PC-3 (cell line): ENCODE measurements at regions of chr3 and their contacts with region 1.

Region 1: DNA sequence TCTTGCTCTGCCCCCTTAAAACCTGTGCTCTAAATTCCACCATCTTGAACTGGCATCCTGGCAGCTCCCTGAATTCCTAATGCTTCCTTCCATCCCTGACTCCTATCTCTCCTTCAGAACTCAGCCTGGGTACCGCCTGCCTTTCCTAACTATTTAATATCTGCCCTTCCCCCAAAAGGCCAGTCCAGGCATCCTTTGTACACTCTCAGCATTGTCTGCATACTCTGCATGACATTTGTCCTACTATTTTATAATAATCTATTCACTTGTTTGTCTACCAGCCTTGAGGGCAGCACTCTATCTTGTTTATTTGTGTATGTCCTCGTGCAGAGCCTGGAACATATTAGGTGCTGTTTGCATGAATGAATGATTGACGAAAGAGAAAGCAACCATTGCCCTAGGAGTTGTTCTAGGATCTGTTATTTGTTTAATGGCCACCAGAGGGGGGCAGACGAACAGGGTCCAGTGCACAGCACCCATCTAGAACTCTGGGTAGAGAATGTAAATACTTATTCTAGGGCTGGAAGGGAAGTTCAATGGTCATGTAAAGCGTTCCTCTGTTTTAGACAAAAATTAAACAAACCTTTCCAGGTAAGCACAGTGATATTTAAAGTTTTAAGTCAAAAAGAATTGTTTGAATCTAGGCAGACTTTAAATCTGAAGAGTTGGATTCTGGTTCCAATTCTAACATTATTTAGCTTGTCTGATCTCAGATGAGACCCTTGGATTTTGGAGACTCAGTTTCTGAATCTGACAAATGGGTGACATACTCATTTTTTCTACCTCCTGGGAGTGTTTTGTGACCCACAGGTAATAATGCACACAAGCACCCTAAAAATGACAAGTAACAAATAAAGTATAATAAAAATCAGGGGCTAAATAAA is 125.8 kb upstream of the GALNT15 start:
- DNase-seq: peak; percentile 83
- ATAC-seq: peak; percentile 99
- H3K4me3 ChIP-seq: peak overlapping the region; percentile 28
- H3K27ac ChIP-seq: no peak overlapping the region
- H3K4me1 ChIP-seq: no peaks in the 10 kb centered on the region
- H3K27me3 ChIP-seq: no peaks in the 10 kb centered on the region
- CTCF ChIP-seq: peak; percentile 95

Region 2: GRCh38 chr3:15629860-15630597 is 418.6 kb before region 1 on chr3:
- CTCF ChIA-PET with region 1: interaction called, 4 read pairs
- POLR2A ChIA-PET with region 1: no interaction called
- intact Hi-C with region 1: loop called (anchors 1 kb)
- DNase-seq: peak; percentile 92
- ATAC-seq: peak; percentile 68
- H3K4me3 ChIP-seq: peak overlapping the region; percentile 55
- H3K27ac ChIP-seq: peak overlapping the region; percentile 89
- H3K4me1 ChIP-seq: peaks cover 50% of the 10 kb centered on the region
- H3K27me3 ChIP-seq: no peaks in the 10 kb centered on the region
- CTCF ChIP-seq: peak; percentile 95

Region 3: GRCh38 chr3:15815696-15816095 is 233.0 kb before region 1 on chr3:
- CTCF ChIA-PET with region 1: interaction called, 4 read pairs
- POLR2A ChIA-PET with region 1: no interaction called
- intact Hi-C with region 1: loop called (anchors 1 kb)
- DNase-seq: peak; percentile 84
- ATAC-seq: peak; percentile 59
- H3K4me3 ChIP-seq: no peak overlapping the region
- H3K27ac ChIP-seq: no peak overlapping the region
- H3K4me1 ChIP-seq: peaks cover 21% of the 10 kb centered on the region
- H3K27me3 ChIP-seq: no peaks in the 10 kb centered on the region
- CTCF ChIP-seq: peak; percentile 84

Region 4: DNA sequence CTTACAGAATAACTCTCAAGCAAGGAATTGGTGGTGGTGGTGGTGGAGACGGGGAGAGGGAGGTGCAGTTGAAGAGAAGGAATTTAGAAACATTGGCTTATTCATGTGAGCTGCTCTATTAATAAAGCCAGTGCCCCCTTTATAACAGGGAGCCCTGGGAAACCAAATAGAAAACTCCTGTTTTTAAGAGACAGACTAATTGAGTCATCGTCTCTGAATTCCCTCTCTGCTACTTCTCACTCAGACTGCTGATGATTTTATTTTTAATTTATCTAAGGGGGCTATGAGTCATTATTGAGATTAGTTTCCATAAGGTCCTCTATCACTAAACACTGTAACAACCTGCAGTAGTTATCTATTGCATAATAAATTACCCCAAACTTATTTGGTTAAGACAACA is 20.1 kb before region 1 on chr3:
- CTCF ChIA-PET with region 1: no interaction called
- POLR2A ChIA-PET with region 1: no interaction called
- intact Hi-C with region 1: no loop called
- DNase-seq: no peak
- ATAC-seq: no peak
- H3K4me3 ChIP-seq: no peak overlapping the region
- H3K27ac ChIP-seq: no peak overlapping the region
- H3K4me1 ChIP-seq: no peaks in the 10 kb centered on the region
- H3K27me3 ChIP-seq: no peaks in the 10 kb centered on the region
- CTCF ChIP-seq: no peak

Region 5: DNA sequence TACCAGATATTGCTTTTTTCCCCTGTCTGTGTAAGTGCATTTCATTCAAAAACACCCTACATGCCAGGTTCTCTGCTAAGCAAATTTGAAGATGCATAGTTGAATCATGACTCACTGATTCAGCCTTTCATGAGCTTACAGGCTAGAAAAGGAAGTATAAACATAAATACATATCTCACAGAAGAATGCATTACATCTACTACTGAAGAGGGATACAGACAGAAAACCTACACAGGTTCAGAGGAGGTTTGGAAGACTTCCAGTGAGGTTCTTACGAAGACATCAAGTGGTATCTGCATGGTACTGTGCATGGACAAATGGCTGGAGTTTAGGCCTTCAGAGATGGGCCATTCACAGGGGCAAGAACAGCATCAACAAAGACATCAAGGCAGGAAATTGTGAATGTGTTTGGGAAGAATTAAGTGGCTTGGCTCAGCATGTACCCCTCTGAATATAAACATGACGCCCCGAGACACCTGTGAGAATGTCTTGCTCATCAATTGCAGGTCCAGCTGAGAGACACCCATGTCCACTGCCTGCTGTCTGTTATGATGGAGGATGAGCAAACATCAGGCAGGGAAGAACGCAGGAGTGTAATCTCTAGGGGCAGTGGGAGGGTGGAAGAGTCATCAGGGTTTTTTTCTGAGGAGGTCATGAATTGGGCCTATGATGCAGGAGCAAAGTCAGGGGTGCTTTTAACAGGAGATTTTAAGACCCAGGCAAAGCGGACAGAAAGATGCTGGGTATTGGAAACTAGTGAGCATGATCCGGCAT is 20.7 kb after region 1 on chr3:
- CTCF ChIA-PET with region 1: interaction called, 9 read pairs
- POLR2A ChIA-PET with region 1: no interaction called
- intact Hi-C with region 1: loop called (anchors 1 kb)
- DNase-seq: peak; percentile 97
- ATAC-seq: peak; percentile 50
- H3K4me3 ChIP-seq: no peak overlapping the region
- H3K27ac ChIP-seq: peak overlapping the region; percentile 78
- H3K4me1 ChIP-seq: peaks cover 81% of the 10 kb centered on the region
- H3K27me3 ChIP-seq: no peaks in the 10 kb centered on the region
- CTCF ChIP-seq: no peak

Region 6: GRCh38 chr3:16112910-16113504 is 64.3 kb after region 1 on chr3:
- CTCF ChIA-PET with region 1: no interaction called
- POLR2A ChIA-PET with region 1: no interaction called
- intact Hi-C with region 1: no loop called
- DNase-seq: peak; percentile 25
- ATAC-seq: peak; percentile 70
- H3K4me3 ChIP-seq: no peak overlapping the region
- H3K27ac ChIP-seq: peak overlapping the region; percentile 53
- H3K4me1 ChIP-seq: peaks cover 10% of the 10 kb centered on the region; the same call in 1 of the 2 replicates
- H3K27me3 ChIP-seq: no peaks in the 10 kb centered on the region
- CTCF ChIP-seq: no peak

Region 7: GRCh38 chr3:16140116-16140893 is 91.6 kb after region 1 on chr3:
- CTCF ChIA-PET with region 1: interaction called, 23 read pairs
- POLR2A ChIA-PET with region 1: no interaction called
- intact Hi-C with region 1: loop called (anchors 1 kb)
- DNase-seq: peak; percentile 78
- ATAC-seq: peak; percentile 88
- H3K4me3 ChIP-seq: no peak overlapping the region
- H3K27ac ChIP-seq: peak overlapping the region; percentile 58
- H3K4me1 ChIP-seq: peaks cover 15% of the 10 kb centered on the region
- H3K27me3 ChIP-seq: no peaks in the 10 kb centered on the region
- CTCF ChIP-seq: no peak

Region 8: GRCh38 chr3:16247276-16248061 is 198.8 kb after region 1 on chr3:
- CTCF ChIA-PET with region 1: no interaction called
- POLR2A ChIA-PET with region 1: no interaction called
- intact Hi-C with region 1: loop called (anchors 1 kb)
- DNase-seq: peak; percentile 93
- ATAC-seq: peak; percentile 87
- H3K4me3 ChIP-seq: peak overlapping the region; percentile 33; the same call in 1 of the 2 replicates
- H3K27ac ChIP-seq: no peak overlapping the region
- H3K4me1 ChIP-seq: peaks cover 25% of the 10 kb centered on the region
- H3K27me3 ChIP-seq: no peaks in the 10 kb centered on the region
- CTCF ChIP-seq: peak; percentile 98